Calu3 (cell line): ENCODE measurements at regions of chr19 and their contacts with region 1.

Region 1: GRCh38 chr19:41263850-41264580 is at the start of gene HNRNPUL1:
- DNase-seq: peak; percentile 99
- H3K4me3 Mint-ChIP-seq: peak within 1 kb of the TSS; percentile 95
- H3K27ac Mint-ChIP-seq: peak within 1 kb of the TSS; percentile 100
- H3K4me1 Mint-ChIP-seq: peaks cover 40% of the 10 kb centered on the region
- H3K27me3 Mint-ChIP-seq: peaks cover 12% of the 10 kb centered on the region
- CTCF ChIP-seq: no peak
- total RNA-seq, gene HNRNPUL1: 320 and 370 TPM in 2 replicates

Region 2: DNA sequence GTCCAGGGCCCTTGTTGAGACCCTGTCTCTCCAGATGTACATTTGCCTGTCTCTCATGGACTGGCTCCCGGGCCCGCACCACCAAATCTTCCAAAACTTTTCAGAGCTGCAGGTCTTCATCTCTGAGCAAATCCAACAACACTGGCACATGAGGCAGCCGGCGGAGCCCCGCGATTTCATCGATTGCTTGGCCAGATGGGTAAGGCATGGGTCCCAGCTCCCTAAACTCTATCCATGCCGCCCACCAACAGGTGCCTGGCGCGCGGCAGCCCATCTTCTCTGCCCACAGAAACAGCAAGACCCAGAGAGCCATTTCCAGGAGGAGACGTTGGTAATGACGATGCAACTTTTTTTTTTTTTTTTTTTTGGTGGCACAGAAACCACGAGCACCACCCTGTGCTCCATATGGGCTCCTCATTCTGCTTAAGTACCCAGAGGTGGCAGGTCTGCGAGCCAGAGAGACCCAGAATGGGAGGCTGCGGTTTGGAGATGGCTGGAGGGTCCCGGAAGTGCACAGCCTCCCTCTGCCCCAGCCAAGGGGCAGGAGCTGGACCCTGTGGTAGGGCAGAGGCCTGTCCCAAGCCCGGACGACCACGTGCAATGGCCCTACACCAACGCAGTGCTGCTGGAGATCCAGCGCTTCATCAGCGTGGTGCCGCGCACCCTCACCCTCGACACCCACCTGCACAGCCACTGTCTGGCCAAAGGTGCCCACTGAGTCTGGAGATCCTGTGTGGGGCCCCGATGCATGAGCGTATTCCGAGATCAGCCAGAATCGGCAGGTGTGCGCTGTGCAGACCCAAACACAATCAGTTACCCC is 127.2 kb before region 1 on chr19:
- CTCF ChIA-PET with region 1: no interaction called
- intact Hi-C with region 1: no loop called
- DNase-seq: no peak
- H3K4me3 Mint-ChIP-seq: no peak overlapping the region
- H3K27ac Mint-ChIP-seq: no peak overlapping the region
- H3K4me1 Mint-ChIP-seq: peaks cover 17% of the 10 kb centered on the region
- H3K27me3 Mint-ChIP-seq: peaks cover 19% of the 10 kb centered on the region
- CTCF ChIP-seq: no peak

Region 3: DNA sequence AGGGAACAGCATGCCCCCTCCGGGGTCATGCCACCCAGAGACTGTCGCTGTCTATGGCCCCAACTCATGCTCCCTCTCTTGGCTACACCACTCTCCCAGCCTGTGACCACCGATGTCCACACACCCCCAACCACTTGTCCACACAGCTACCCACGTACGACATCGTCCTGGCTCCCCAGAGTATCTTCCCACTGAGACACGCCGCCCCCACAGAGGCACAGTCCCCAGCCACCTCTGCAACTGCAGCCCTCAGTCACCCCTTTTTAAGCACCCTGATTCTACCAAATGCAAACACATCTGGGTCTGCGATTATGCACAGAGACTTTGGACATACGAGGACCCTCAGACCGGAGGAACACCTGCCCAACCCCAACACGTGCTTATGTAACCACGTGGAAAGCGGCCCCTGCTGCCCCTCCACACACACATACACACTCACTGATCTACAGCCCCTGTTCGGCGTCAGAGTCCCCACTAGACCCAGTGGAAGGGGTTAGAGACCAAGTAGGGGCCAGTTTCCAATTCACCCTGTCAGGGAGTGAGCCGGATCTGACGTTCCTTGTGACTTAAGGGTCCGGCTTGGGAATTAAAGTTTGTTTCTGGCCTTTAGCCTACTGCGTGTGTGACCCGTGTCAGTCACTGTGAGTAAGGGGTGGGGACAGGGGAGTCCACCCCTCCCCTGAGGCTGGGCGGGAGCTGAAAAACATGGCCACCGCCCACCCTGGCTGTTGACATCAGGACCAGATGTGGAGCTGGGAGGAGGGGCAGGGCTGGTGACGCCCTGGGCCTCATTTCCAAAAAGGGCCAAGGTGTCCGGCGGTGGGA is 56.9 kb before region 1 on chr19:
- CTCF ChIA-PET with region 1: interaction called, 54 read pairs
- intact Hi-C with region 1: loop called (anchors 1 kb)
- DNase-seq: no peak
- H3K4me3 Mint-ChIP-seq: no peak overlapping the region
- H3K27ac Mint-ChIP-seq: no peak overlapping the region
- H3K4me1 Mint-ChIP-seq: peaks cover 13% of the 10 kb centered on the region
- H3K27me3 Mint-ChIP-seq: no peaks in the 10 kb centered on the region
- CTCF ChIP-seq: no peak

Region 4: DNA sequence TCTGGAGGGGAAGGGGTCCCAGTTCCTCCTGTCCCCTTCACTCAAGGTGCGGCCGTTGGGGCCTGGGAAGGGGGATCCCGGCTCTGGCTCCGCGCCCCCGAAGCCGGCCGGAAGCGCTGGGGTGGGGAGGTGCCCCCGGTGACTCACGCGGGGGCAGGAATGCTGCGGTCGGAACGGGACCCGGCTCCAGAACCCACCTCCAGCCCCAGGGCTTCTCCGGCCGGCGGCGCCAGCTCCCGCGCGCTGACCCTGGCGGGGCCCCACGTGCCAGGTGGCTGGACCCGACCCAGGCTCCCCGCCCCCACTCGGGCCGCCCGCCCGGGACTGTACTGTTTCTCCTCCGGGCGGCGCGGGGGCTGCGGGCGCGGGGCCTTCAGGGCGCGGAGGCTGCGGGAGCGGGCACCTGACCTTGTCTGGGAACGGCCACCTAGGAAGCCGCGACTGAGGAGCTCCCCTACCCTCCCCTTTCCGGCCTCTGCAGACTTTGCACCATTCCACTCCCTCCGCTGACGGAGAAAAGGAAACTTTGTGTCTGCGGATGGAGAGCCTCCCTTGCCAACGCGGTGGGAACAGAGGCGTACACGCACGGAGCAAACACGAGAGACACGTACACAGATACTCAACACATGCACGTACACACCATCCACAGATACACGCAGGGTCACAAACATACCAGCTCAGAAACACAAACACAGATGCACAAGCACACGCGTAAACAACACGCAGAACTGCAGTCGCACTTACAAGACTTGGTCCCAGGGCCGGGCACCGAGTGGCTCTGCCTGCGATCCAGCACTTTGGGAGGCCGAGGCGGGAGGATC is 37.8 kb before region 1 on chr19:
- CTCF ChIA-PET with region 1: interaction called, 9 read pairs
- intact Hi-C with region 1: loop called (anchors 5 kb)
- DNase-seq: peak; percentile 95
- H3K4me3 Mint-ChIP-seq: peak overlapping the region; percentile 66
- H3K27ac Mint-ChIP-seq: peak overlapping the region; percentile 98
- H3K4me1 Mint-ChIP-seq: peaks cover 45% of the 10 kb centered on the region
- H3K27me3 Mint-ChIP-seq: no peaks in the 10 kb centered on the region
- CTCF ChIP-seq: no peak